GM12878 (cell line): ENCODE measurements at regions of chr3 and their contacts with region 1.

Region 1: GRCh38 chr3:179929091-179929529 is 107.6 kb downstream of the PEX5L start:
- DNase-seq: no peak
- ATAC-seq: peak; percentile 84
- H3K4me3 ChIP-seq: no peak overlapping the region
- H3K27ac ChIP-seq: no peak overlapping the region
- H3K4me1 ChIP-seq: no peaks in the 10 kb centered on the region; the same call in 1 of the 2 replicates
- H3K27me3 ChIP-seq: no peaks in the 10 kb centered on the region
- CTCF ChIP-seq: peak; percentile 70 to 79 (median 72)
- EP300 ChIP-seq: no peak
- POLR2A ChIP-seq: no peak
- RAD21 ChIP-seq: peak; percentile 92

Region 2: GRCh38 chr3:179852142-179852905 is 76.8 kb before region 1 on chr3:
- CTCF ChIA-PET with region 1: interaction called, 11 read pairs
- POLR2A ChIA-PET with region 1: no interaction called
- RAD21 ChIA-PET with region 1: interaction called, 6 read pairs
- SMC1A ChIA-PET with region 1: interaction called, 4 read pairs
- in situ Hi-C with region 1: no loop called
- intact Hi-C with region 1: no loop called
- DNase-seq: no peak
- ATAC-seq: peak; percentile 98
- H3K4me3 ChIP-seq: no peak overlapping the region
- H3K27ac ChIP-seq: no peak overlapping the region
- H3K4me1 ChIP-seq: peaks cover 4% of the 10 kb centered on the region; the same call in 1 of the 2 replicates
- H3K27me3 ChIP-seq: no peaks in the 10 kb centered on the region
- CTCF ChIP-seq: peak in 2 of 3 experiments; percentile 12 to 19; a peak in 1 of 6 replicates
- EP300 ChIP-seq: no peak
- POLR2A ChIP-seq: no peak
- RAD21 ChIP-seq: peak; percentile 36; the same call in 1 of the 2 replicates

Region 3: DNA sequence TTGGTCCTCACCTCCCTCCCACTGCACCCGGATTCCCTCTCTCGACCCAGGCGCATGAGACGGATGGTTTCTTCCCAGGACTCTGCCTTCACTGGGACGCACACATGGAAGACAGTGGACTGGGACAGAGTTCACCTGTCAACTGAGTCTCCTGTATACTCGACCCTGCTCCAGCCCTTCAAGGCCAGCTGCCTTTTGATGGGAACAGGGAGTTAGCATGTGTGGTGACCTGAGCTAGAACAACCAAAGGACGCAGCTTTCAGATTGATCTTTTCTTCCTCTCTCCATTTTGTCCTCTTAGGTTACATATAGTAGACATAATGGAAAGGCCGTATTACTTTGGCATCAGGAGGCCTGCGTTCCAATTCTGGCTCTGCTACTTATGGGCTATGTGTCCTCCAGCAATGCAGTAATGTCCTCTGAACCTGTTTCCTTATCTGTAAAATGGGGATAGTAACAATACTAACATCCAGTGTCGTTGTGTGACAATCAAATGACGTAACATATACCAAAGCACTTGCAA is 13.5 kb after region 1 on chr3:
- CTCF ChIA-PET with region 1: interaction called, 34 read pairs
- POLR2A ChIA-PET with region 1: interaction called, 3 read pairs
- RAD21 ChIA-PET with region 1: interaction called, 10 read pairs
- SMC1A ChIA-PET with region 1: interaction called, 24 read pairs
- in situ Hi-C with region 1: no loop called
- intact Hi-C with region 1: no loop called
- DNase-seq: no peak
- ATAC-seq: peak; percentile 48
- H3K4me3 ChIP-seq: no peak overlapping the region
- H3K27ac ChIP-seq: no peak overlapping the region
- H3K4me1 ChIP-seq: no peaks in the 10 kb centered on the region
- H3K27me3 ChIP-seq: no peaks in the 10 kb centered on the region
- CTCF ChIP-seq: no peak
- EP300 ChIP-seq: no peak
- POLR2A ChIP-seq: no peak
- RAD21 ChIP-seq: no peak

Region 4: DNA sequence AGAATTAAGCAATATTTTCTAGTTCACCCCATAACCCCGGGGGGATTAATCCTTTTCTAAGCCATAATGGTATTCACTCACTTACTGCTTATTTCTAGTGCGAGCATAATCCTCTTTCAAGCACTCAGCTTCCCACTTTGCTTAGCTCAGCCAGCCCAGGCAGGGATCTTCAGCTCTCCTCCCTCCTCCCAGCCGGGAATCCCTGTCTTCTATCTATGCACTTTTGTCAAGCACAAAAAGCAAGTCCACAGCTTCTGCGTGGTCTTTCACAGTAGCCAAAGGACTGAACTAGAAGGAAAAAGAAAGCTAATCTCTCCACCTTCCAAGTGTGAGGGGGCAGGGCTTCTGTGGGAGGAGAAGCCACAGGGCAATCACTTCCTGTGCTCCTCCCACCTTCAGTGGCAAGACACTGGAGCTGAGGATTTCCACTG is 44.8 kb after region 1 on chr3:
- CTCF ChIA-PET with region 1: interaction called, 20 read pairs
- POLR2A ChIA-PET with region 1: no interaction called
- RAD21 ChIA-PET with region 1: interaction called, 5 read pairs
- SMC1A ChIA-PET with region 1: interaction called, 22 read pairs
- in situ Hi-C with region 1: no loop called
- intact Hi-C with region 1: no loop called
- DNase-seq: no peak
- ATAC-seq: peak; percentile 69
- H3K4me3 ChIP-seq: no peak overlapping the region
- H3K27ac ChIP-seq: no peak overlapping the region
- H3K4me1 ChIP-seq: no peaks in the 10 kb centered on the region; the same call in 1 of the 2 replicates
- H3K27me3 ChIP-seq: no peaks in the 10 kb centered on the region
- CTCF ChIP-seq: no peak
- EP300 ChIP-seq: no peak
- POLR2A ChIP-seq: no peak
- RAD21 ChIP-seq: no peak

Region 5: DNA sequence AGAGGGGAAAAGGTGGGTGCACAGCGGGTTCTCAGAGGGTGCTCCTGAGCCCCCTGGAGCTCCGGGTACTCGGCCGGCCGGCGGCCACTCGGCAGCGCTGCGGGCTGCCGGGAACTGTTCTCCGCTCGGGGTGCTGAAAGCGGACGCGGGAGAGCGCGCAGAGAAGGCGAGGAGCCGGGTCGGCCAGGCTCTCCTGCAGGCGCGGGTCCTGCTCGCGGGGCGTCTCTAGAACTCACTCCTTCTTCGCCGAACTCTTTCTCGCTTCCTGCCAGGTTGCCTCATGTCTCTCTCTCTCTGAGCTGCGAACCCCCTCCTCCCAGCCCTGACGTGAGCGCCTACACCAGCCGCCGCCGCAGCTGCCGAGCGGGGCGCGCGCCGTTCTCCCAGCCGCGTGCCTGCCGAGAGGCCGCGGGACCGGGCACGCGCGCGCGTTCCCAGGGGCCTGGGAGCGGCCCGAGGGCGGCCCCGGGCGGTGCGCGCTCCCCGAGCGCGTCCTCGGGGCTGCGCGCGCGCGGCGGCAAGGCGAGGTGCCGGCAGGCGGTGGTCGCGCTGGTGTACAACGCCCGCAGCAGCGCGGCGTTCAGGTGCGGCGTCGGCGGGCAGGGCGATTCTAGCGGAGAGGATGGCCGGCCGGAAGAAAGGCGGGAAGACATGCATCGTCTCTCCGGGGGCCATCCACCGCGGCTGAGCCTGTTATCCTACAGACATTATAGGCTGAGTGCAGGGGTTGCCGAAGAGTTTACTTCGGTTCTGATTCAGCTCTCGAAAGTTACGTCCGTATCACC is 107.8 kb after region 1 on chr3 and contains the start of gene PEX5L:
- CTCF ChIA-PET with region 1: interaction called, 13 read pairs
- POLR2A ChIA-PET with region 1: no interaction called
- RAD21 ChIA-PET with region 1: interaction called, 7 read pairs
- SMC1A ChIA-PET with region 1: interaction called, 9 read pairs
- in situ Hi-C with region 1: no loop called
- intact Hi-C with region 1: no loop called
- DNase-seq: no peak
- ATAC-seq: peak; percentile 93
- H3K4me3 ChIP-seq: peak within 1 kb of the TSS; percentile 65
- H3K27ac ChIP-seq: no peak within 1 kb of the TSS
- H3K4me1 ChIP-seq: peaks cover 5% of the 10 kb centered on the region; the same call in 1 of the 2 replicates
- H3K27me3 ChIP-seq: 0 out of 4 replicates have a peak, but pooled peaks cover 0 to 3% of the 10 kb centered on the region in 2 experiments
- CTCF ChIP-seq: 0 out of 6 replicates have a peak, but pooled peaks of 1 of the 3 experiments have one; percentile 5
- EP300 ChIP-seq: no peak
- POLR2A ChIP-seq: no peak
- RAD21 ChIP-seq: peak; percentile 17; the same call in 1 of the 2 replicates
- polyA plus RNA-seq, gene PEX5L: 0.11 to 0.13 TPM

Region 6: DNA sequence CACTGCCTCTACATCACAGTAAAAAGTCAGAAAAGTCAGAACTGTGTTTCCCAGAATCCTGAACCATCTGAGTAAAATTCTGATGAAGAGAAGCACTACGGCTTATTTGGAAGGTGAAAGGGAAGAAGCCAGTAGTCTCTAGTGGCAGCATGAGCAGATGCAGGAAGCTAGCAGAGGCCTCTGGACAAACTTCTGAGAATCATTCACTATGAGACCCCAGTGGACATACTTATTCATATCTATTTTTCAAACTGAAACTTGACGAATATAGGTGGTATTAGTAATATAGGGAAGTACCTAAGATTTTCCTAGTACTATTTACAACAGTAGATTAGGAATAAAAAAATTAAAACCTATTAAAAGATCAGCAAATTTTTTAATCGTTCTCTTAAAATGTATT is 400.1 kb after region 1 on chr3:
- CTCF ChIA-PET with region 1: interaction called, 4 read pairs
- POLR2A ChIA-PET with region 1: no interaction called
- RAD21 ChIA-PET with region 1: interaction called, 8 read pairs
- SMC1A ChIA-PET with region 1: interaction called, 14 read pairs
- in situ Hi-C with region 1: no loop called
- intact Hi-C with region 1: no loop called
- DNase-seq: peak; percentile 43
- ATAC-seq: peak; percentile 88
- H3K4me3 ChIP-seq: no peak overlapping the region
- H3K27ac ChIP-seq: peak overlapping the region; percentile 56
- H3K4me1 ChIP-seq: peaks cover 32% of the 10 kb centered on the region
- H3K27me3 ChIP-seq: no peaks in the 10 kb centered on the region
- CTCF ChIP-seq: peak; percentile 26 to 32 (median 29); a peak in 2 of 6 replicates
- EP300 ChIP-seq: peak in 1 of 2 experiments; percentile 21; a peak in 1 of 4 replicates
- POLR2A ChIP-seq: no peak
- RAD21 ChIP-seq: peak; percentile 55